HCT116 (cell line): ENCODE measurements at regions of chr12 and their contacts with region 1.

Region 1: GRCh38 chr12:30286345-30286926 is 409.2 kb downstream of the IPO8 start:
- DNase-seq: peak; percentile 22
- ATAC-seq: no peak; the same call in 1 of the 2 replicates
- H3K4me3 ChIP-seq: no peak overlapping the region
- H3K27ac ChIP-seq: no peak overlapping the region
- H3K4me1 ChIP-seq: no peaks in the 10 kb centered on the region
- H3K27me3 ChIP-seq: no peaks in the 10 kb centered on the region
- CTCF ChIP-seq: peak; percentile 34 to 66 (median 49); a peak in 5 of 6 replicates
- POLR2A ChIP-seq: no peak
- RAD21 ChIP-seq: peak; percentile 64

Region 2: GRCh38 chr12:29901585-29901984 is 384.9 kb before region 1 on chr12:
- CTCF ChIA-PET with region 1: no interaction called
- POLR2A ChIA-PET with region 1: no interaction called
- RAD21 ChIA-PET with region 1: no interaction called
- intact Hi-C with region 1: no loop called
- DNase-seq: no peak
- ATAC-seq: no peak
- H3K4me3 ChIP-seq: no peak overlapping the region
- H3K27ac ChIP-seq: no peak overlapping the region
- H3K4me1 ChIP-seq: no peaks in the 10 kb centered on the region
- H3K27me3 ChIP-seq: 0 out of 2 replicates have a peak, but pooled peaks cover 2% of the 10 kb centered on the region
- CTCF ChIP-seq: peak in 1 of 3 experiments; percentile 42; a peak in 2 of 6 replicates
- POLR2A ChIP-seq: no peak
- RAD21 ChIP-seq: 0 out of 2 replicates have a peak, but pooled peaks have one; percentile 5

Region 3: DNA sequence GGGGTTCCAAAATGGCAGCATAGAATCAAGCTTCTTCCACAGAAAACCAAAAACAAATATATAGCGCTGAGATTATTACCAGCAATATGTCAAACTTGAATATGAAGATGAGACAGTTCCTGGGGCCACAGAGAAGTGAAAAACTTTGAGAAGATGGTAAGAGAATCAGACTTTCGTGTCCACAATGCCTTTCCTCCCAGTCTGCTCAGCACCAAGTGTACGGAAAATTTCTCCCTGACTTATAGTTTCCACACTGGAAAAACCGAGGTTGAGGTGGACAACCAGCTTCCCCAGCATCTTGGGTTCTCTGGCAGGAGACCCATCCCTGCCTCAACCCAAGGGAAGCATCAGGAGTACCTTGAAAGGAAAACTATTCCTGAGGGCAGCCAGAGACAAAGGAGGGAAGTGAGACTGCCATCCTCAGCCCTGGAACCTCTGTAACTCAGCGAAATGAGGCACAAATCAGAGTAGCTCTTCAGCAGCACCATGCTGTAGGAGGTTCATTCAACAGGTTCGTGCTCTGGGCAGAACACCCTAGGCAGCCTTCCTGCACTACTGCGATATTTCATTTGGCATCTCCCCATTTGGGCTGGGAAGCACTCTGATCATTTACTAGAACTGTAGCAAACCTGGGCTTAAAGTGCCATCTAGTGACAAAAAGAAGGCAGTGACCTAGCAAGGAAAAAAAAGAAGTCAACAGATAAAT is 520.7 kb after region 1 on chr12:
- CTCF ChIA-PET with region 1: no interaction called
- POLR2A ChIA-PET with region 1: no interaction called
- RAD21 ChIA-PET with region 1: no interaction called
- intact Hi-C with region 1: loop called (anchors 10 kb)
- DNase-seq: peak; percentile 51
- ATAC-seq: peak; percentile 96
- H3K4me3 ChIP-seq: no peak overlapping the region
- H3K27ac ChIP-seq: no peak overlapping the region
- H3K4me1 ChIP-seq: peaks cover 0 to 4% of the 10 kb centered on the region in 2 experiments; a peak in 1 of 4 replicates
- H3K27me3 ChIP-seq: no peaks in the 10 kb centered on the region
- CTCF ChIP-seq: peak; percentile 68 to 96 (median 73)
- POLR2A ChIP-seq: no peak
- RAD21 ChIP-seq: peak; percentile 94